GM10248 (cell line): ENCODE measurements at regions of chr22 and their contacts with region 1.

Region 1: DNA sequence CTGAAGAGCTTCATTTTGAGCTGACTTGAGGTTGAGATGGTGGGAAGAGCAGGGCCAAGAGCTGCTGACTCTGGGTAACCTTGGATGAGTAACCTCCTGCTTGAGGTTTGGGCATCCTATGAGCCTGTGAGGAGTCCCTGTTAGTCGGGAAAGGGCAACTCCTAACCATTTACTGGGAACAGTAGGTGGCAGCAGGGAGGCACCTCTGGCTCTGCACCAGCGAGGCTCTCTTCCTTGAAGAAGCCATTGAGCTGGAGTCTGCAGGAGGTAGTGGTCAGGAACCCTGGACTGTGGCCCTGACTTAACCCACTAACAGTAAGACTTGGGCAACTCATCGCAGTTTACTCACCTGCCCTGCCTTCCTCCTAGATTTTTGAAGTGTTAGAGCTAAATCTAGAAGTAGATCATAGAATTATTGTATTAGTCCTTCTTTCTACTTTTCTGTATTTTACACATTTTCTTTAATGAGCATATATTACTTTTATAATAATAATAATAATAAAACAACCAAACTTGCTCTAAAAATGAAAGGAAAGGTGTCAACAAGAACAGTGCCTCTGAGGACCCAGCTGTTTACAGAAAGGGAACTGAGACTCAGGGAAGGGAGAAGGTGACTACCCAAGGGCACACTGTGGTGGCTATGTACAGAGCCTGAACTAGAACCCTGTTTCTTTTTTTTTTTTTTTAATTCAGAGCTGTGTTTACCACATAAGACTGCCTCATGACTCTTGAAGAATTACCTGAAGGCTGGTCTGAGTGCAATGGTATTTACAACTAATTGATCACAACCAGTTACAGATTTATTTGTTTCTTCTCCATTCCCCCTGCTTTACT is 47.5 kb downstream of the MEI1 start:
- DNase-seq: peak; percentile 69
- CTCF ChIP-seq: peak; percentile 79

Region 2: GRCh38 chr22:41532908-41533825 is 213.6 kb before region 1 on chr22:
- CTCF ChIA-PET with region 1: no interaction called
- POLR2A ChIA-PET with region 1: no interaction called
- DNase-seq: peak; percentile 81
- CTCF ChIP-seq: peak; percentile 83

Region 3: GRCh38 chr22:41725510-41726110 is 21.2 kb before region 1 on chr22:
- CTCF ChIA-PET with region 1: interaction called, 12 read pairs
- POLR2A ChIA-PET with region 1: no interaction called
- DNase-seq: no peak
- CTCF ChIP-seq: no peak

Region 4: DNA sequence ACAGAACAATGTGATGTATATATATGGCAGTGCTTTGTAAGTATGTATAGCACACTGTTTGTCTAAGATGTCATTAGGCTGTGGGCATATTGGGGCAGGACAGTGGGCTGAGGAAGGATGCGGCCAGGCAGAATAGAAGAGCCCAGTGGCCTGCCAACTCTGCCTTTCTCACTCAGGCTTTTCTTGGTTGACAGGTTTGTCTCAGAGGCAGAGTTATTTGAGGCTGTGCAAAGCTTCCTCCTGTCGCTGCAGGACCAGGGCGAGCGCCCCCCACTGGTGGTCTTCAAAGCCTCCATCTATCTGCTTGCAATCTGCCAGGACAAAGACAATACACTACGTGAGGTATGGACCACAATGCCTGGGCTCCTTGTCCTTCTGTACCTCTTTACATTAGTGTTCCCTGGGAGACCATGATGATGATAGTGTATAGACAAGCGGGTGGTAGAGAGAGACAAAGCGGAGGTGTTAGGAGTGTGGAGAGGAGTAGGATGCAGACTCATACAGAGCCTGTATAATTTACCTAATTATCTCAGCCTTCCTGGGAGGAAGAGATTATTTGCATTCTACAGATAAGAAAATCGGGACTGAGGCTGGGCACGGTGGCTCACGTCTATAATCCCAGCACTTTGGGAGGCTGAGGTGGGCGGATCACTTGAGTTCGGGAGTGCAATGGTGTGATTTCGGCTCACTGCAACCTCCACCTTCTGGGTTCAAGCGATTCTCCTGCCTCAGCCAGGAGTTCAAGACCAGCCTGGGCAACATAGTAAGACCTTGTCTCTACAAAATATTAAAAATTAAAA is 16.4 kb after region 1 on chr22:
- CTCF ChIA-PET with region 1: interaction called, 20 read pairs
- POLR2A ChIA-PET with region 1: no interaction called
- DNase-seq: peak; percentile 57
- CTCF ChIP-seq: peak; percentile 40

Region 5: GRCh38 chr22:41780746-41781505 is 34.1 kb after region 1 on chr22:
- CTCF ChIA-PET with region 1: interaction called, 25 read pairs
- POLR2A ChIA-PET with region 1: interaction called, 4 read pairs
- DNase-seq: peak; percentile 89
- CTCF ChIP-seq: no peak